Dendritic cell treated with granulocyte-macrophage colony-stimulating factor and Interleukin-4, amounts not matched to agents 40 ng/mL and 50 ng/mL, for 4 days (primary cell): ENCODE measurements at regions of chr6 and their contacts with region 1.

Region 1: DNA sequence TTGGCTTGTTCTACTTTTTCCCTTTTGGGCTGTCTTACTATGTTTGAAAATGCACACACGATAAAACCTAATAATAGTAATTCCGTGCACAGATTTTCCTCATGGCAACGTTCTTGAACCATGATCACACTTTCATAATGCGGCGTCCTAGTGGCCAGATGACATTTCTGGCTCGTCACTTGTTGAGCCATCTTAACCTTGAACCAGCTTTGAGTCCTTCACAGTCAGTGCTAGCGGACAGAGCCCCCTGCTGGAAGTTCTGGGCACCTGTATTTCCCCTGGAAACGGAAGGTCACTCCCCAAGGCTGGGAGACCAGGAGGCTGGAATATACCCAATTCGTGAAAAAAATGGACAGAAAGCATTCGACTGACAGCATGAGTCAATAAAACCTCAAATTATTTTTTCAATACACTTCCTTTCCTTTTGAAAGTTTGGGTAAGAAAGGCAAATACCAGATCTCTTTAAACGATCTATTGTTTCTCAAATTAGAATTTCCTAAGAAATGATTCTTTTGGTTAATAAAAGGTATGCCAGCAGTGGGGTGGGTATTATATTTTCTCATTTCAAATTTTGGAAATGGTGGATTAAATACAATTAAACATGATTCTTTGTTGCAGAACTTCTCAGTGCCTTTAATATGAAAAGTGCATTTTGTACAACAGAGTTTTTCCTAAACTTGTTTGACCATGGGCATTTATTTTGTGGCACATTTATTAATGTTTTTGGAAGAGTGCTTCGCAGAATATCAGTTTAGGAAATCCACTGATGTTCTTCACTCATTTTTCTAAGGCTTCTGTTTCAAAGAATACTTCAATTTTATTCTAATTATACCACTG is 542.3 kb downstream of the QKI start:
- H3K4me3 Mint-ChIP-seq: no peak overlapping the region
- H3K27ac Mint-ChIP-seq: no peak overlapping the region
- H3K4me1 Mint-ChIP-seq: no peaks in the 10 kb centered on the region
- H3K27me3 Mint-ChIP-seq: peaks cover 55% of the 10 kb centered on the region

Region 2: DNA sequence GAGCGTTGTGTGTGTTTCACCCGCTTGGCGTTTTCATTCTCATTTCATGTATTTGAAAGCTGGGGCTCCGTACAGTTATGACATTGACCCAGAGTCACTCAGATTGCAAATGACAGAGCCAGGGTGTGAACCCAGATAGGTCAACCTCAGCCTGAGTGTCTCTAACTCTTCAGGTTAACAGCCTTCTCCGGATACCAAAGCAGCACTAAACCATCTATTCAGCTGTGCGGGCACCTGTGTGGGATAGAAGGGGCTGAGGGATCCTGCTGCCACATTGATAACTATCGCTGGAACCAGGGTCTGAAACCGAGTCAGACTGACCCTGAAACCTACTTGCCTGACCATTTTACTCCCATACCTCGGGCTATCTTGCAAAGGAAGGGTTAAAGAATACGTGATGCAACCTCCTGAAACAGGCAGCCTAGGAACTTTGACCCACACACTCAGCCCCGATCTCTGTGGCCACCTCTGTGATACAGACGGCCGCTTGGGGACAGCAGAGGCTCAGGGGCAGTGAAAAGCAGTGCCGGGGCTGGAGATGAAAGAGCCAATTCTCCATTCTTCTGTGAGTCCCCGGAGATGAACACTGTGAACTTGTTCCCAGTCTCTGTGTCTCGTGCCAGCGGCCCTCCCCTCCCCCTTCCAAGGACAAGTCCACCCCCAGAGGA is 775.8 kb before region 1 on chr6:
- intact Hi-C with region 1: loop called (anchors 2 kb)
- H3K4me3 Mint-ChIP-seq: no peak overlapping the region
- H3K27ac Mint-ChIP-seq: no peak overlapping the region
- H3K4me1 Mint-ChIP-seq: peaks cover 14% of the 10 kb centered on the region
- H3K27me3 Mint-ChIP-seq: peaks cover 14% of the 10 kb centered on the region

Region 3: GRCh38 chr6:163427498-163428254 is 529.1 kb before region 1 on chr6:
- intact Hi-C with region 1: loop called (anchors 5 kb)
- H3K4me3 Mint-ChIP-seq: no peak overlapping the region
- H3K27ac Mint-ChIP-seq: no peak overlapping the region
- H3K4me1 Mint-ChIP-seq: peaks cover 58% of the 10 kb centered on the region
- H3K27me3 Mint-ChIP-seq: no peaks in the 10 kb centered on the region

Region 4: GRCh38 chr6:163579880-163580295 is 376.9 kb before region 1 on chr6:
- intact Hi-C with region 1: loop called (anchors 5 kb)
- H3K4me3 Mint-ChIP-seq: no peak overlapping the region
- H3K27ac Mint-ChIP-seq: no peak overlapping the region
- H3K4me1 Mint-ChIP-seq: peaks cover 6% of the 10 kb centered on the region
- H3K27me3 Mint-ChIP-seq: no peaks in the 10 kb centered on the region

Region 5: DNA sequence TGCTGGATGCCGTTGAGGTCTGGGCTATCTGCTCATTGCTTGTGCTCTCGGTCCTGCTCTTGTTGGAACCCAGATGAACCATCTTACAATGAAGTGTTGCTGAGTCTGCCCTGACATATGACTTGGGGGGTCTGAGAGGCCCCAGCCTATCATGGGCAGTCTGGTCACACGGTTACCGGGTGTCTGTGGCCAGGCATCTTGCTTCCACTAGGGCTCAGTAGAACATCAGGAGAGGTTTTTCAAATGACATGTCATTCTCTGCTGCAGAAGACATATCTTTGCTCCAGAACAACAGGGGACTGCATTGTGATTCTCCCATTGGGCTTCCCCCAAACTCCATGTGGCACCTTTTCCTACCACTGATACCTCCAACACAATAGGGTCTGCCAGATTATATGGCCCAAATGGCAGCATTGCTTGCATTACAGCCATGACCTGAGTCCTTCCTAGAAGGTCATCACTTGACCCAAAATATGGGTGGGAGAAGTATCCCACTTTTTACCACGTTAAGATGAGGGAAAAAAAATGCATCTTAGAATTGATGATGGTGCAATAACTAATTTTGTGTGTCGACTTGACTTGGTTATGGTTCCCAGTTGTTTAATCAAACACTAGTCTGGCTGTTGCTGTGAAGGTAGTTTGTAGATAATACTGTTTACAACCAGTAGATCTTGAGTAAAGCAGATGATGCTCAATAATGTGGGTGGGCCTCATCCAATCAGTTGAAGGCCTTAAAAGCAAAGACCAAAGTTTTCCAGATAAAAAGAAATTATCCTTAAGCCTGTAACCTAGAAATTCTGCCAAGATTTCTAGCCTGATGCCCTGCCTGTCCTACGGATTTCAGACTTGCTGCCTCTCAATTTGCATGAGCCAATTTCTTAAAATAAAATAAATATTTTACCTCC is 301.3 kb before region 1 on chr6:
- intact Hi-C with region 1: loop called (anchors 1 kb)
- H3K4me3 Mint-ChIP-seq: no peak overlapping the region
- H3K27ac Mint-ChIP-seq: no peak overlapping the region
- H3K4me1 Mint-ChIP-seq: peaks cover 46% of the 10 kb centered on the region
- H3K27me3 Mint-ChIP-seq: peaks cover 24% of the 10 kb centered on the region

Region 6: DNA sequence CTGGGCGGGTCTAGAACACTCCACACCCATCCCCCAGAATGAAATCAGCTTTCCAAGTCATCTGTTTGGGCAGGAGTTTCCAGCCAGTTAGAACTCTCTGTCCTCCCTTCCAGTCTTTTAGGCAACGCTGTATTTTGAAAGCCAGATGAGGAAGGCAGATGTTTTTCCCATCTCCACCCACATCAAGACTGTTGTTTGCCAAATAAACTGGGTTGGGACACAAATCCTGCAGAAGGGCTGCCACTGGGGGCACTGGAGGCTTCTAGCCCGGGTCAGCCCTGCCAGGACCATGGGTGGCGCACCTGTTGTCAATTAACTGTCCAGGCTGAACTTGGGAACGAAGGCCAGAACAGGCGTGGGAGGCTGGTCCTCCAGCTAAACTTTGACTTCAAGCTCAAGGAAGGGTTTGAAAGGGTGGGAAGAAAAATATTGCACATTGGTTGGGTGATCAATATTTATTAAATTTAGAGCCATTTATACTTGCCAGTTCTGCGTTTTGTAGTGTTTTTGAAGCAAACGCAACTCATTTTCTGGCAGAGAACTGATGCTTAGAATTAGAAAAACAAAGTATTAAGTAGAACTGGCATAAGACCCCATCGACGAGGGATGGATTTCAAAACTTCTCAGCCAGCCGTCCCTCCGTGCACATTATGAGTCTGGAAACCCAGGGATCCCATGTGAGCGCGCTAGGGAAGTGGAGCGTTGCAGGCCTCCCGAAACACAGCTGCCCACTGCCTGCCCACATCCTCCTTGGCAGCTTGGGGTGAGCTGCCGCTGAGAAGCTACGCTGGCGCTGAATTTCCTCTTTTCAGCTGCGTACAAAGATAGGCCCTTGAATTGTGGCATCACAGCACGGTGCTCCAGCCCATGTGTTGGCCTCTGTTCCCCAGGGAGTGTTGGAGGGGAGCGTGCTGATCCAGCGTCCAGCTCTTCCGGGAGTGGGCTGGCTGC is 244.9 kb before region 1 on chr6:
- intact Hi-C with region 1: loop called (anchors 10 kb)
- H3K4me3 Mint-ChIP-seq: peak overlapping the region; percentile 37
- H3K27ac Mint-ChIP-seq: peak overlapping the region; percentile 95
- H3K4me1 Mint-ChIP-seq: peaks cover 96% of the 10 kb centered on the region
- H3K27me3 Mint-ChIP-seq: no peaks in the 10 kb centered on the region

Region 7: GRCh38 chr6:163897030-163897429 is 59.8 kb before region 1 on chr6:
- intact Hi-C with region 1: no loop called
- H3K4me3 Mint-ChIP-seq: no peak overlapping the region
- H3K27ac Mint-ChIP-seq: no peak overlapping the region
- H3K4me1 Mint-ChIP-seq: no peaks in the 10 kb centered on the region
- H3K27me3 Mint-ChIP-seq: peaks cover 20% of the 10 kb centered on the region